Activated CD8-positive, alpha-beta memory T cell treated with anti-CD3 and anti-CD28 coated beads, Interleukin-2, amount 10 ng/mL, durations not matched to agents 7 days and 5 days (primary cell): ENCODE measurements at regions of chr15 and their contacts with region 1.

Region 1: DNA sequence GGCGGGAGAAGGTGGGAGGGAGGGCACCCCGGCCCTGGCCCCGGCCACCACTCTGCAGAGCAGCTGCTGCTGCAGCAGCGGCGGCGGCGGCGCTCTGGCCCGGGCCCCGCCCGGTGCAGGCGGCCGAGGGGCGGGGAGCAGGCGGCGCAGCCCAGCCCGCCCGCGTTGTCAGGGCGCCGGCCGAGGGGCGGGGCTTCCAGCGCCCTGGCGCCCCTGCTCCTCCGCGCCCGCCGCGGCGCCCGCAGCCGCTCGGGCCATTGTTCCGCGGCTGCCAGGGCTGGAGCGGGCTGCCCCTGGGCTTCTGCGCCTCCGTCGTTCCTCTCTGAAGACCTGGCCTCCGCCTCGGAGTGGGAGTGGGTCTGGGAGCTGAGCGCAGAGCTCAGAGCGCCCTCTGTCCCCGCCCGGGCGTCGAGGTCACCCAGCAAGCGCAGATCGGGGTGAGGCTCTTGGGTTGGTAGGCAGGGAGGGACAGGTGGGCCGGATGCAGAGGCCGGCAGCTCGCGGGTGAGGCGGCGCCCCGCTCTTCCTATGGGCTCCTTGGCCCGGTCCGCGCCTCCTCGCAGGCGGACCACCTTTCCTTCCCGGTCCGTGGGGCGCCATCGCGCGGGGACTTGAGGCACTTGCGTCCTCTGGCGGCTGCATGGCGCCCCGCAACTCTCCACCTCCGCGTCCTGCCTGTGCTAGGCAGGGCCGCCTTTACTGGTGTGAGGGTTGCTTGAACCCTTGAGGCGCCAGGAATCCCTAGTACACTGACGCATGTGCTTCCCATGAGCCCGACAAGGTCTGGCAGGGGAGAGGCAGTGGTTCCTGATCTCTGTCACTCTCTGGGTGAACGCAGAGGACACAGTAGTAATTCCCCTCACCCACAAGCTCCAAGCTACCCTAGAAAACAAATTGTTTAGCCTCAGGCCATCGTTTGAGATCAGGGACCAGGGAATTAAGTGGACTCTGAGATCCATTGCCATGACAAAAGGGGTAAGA is at the start of gene LPCAT4:
- DNase-seq: peak; percentile 95
- ATAC-seq: peak; percentile 87
- H3K4me3 Mint-ChIP-seq: peak within 1 kb of the TSS; percentile 96
- H3K27ac Mint-ChIP-seq: peak within 1 kb of the TSS; percentile 97
- H3K4me1 Mint-ChIP-seq: peaks cover 41% of the 10 kb centered on the region
- H3K27me3 Mint-ChIP-seq: no peaks in the 10 kb centered on the region
- total RNA-seq, gene LPCAT4: 126 to 128 TPM

Region 2: DNA sequence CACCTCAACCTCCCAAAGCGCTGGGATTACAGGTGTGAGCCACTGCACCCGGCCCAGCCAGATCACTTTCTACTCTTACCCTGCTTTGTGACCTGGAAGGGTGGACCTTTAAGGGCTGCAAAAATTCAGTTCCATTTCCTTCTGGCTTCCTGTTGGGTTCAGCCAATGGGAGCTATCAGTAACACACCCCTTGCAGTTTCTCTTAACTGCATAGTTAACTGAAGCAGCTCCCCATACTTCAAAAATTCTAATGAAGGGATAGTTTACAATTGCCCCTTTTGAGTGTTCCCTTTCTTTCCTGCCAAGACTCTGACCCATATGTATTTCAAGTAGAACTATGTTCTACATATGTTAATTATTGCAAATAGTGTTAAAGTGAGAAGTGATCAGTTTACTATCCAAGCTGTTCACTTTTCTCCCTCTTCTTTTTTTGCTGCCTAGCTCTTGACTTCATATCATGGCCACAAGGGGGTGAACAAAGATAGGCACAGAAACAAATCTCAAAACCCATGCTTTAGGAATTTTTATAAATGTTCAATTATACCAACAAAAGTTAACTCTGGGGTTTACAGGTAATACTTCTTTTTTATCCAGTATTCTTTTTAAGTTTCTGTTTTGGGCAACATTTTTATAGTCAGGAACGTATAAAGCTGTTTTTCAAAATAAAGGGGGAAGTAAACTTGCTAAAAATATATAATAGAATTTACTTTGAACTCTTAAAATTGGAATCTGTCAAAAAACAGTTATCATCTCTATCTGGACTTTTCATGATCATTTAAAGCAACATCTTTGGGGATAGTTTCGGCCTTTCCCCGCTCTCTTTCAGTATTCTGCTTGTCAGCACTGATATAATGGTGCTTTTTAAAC is 257.4 kb before region 1 on chr15:
- CTCF ChIA-PET with region 1: interaction called, 10 read pairs
- DNase-seq: no peak
- ATAC-seq: peak; percentile 58
- H3K4me3 Mint-ChIP-seq: no peak overlapping the region
- H3K27ac Mint-ChIP-seq: no peak overlapping the region
- H3K4me1 Mint-ChIP-seq: peaks cover 3% of the 10 kb centered on the region
- H3K27me3 Mint-ChIP-seq: peaks cover 3% of the 10 kb centered on the region

Region 3: DNA sequence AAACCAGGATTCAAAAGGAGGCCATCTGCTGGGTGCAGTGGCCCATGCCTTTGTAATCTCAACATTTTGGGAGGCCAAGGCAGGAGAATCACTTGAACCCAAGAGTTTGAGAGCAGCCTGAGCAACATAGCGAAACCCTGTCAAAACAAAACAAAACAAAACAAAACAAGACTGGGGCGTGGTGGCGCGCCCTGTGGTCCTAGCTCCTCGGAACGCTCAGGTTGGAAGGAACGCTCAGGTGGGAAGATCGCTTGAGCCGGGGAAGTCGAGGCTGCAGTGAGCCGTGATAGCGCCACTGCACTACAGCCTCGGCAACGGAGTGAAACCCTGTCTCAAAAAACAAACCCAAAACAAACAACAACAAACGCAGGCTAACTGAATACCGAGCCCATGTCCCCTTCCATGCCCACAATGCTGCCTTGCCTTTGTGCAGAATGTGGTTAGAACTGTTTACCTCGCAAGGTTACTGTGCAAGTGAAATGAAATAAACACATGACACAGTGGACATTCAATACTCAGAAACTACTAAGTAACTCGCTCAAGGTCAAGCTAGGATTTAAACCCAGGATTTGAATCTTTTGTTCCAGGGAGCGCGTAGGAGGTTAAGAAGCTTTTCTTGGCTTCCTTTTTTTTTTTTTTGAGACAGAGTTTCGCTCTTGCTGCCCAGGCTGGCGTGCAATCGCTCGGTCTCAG is 143.3 kb before region 1 on chr15:
- CTCF ChIA-PET with region 1: interaction called, 11 read pairs
- DNase-seq: no peak
- ATAC-seq: peak; percentile 15
- H3K4me3 Mint-ChIP-seq: peak overlapping the region; percentile 97
- H3K27ac Mint-ChIP-seq: peak overlapping the region; percentile 96
- H3K4me1 Mint-ChIP-seq: peaks cover 29% of the 10 kb centered on the region
- H3K27me3 Mint-ChIP-seq: no peaks in the 10 kb centered on the region

Region 4: GRCh38 chr15:34241372-34242330 is 125.7 kb before region 1 on chr15:
- CTCF ChIA-PET with region 1: interaction called, 26 read pairs
- DNase-seq: peak; percentile 56
- ATAC-seq: peak; percentile 77
- H3K4me3 Mint-ChIP-seq: no peak overlapping the region
- H3K27ac Mint-ChIP-seq: peak overlapping the region; percentile 41
- H3K4me1 Mint-ChIP-seq: peaks cover 30% of the 10 kb centered on the region
- H3K27me3 Mint-ChIP-seq: no peaks in the 10 kb centered on the region

Region 5: GRCh38 chr15:34327906-34328305 is 39.5 kb before region 1 on chr15:
- CTCF ChIA-PET with region 1: interaction called, 17 read pairs
- DNase-seq: no peak
- ATAC-seq: no peak
- H3K4me3 Mint-ChIP-seq: peak overlapping the region; percentile 59
- H3K27ac Mint-ChIP-seq: peak overlapping the region; percentile 78
- H3K4me1 Mint-ChIP-seq: peaks cover 64% of the 10 kb centered on the region
- H3K27me3 Mint-ChIP-seq: no peaks in the 10 kb centered on the region

Region 6: DNA sequence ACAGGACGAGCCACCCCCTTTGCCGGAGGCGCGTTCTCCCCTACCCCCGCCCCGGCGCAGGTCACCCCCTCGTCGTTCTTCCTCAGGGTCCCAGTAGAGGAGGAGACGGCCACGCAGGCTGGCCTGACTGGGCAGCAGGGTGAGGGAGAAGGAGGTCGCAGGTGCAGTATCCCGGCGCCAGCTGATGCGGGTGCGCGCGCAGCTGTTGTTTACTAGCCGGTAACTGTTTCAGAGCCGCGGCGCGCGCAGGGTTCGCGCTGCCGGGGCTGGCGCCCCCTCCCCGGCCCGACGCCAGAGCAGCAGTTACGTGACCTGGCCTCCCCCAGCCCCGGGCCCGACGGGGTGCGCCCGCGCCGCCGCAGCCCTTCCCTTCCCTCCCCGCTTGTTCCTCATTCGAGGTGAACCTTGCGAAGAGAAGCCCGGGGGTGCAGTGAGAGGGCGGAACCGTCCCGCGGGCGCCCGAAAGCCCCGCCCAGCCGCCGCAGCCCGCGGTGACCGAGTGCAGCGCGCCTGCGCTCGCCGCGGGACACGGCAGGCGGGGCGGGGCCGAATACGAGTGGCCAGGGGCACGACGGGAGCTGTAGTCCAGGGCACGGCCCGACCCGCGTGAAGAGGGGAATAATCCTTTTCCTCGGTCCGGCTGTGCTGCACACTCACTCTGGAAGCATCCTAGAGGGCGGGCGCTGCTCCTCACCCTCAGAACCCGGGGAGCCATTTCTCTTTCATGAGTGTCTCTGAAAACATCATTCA is 29.7 kb before region 1 on chr15 and contains the start of gene SLC12A6:
- CTCF ChIA-PET with region 1: interaction called, 55 read pairs
- DNase-seq: peak; percentile 93
- ATAC-seq: peak; percentile 84
- H3K4me3 Mint-ChIP-seq: peak within 1 kb of the TSS; percentile 93
- H3K27ac Mint-ChIP-seq: peak within 1 kb of the TSS; percentile 93
- H3K4me1 Mint-ChIP-seq: peaks cover 67% of the 10 kb centered on the region
- H3K27me3 Mint-ChIP-seq: no peaks in the 10 kb centered on the region
- total RNA-seq, gene SLC12A6: 28.2 to 55.2 TPM

Region 7: GRCh38 chr15:34342737-34343575 is 24.4 kb before region 1 on chr15 and contains the starts of genes NOP10 and NUTM1:
- CTCF ChIA-PET with region 1: interaction called, 55 read pairs
- DNase-seq: peak; percentile 96
- ATAC-seq: peak; percentile 85
- H3K4me3 Mint-ChIP-seq: no peak within 1 kb of the TSS
- H3K27ac Mint-ChIP-seq: peak within 1 kb of the TSS; percentile 67
- H3K4me1 Mint-ChIP-seq: peaks cover 29% of the 10 kb centered on the region
- H3K27me3 Mint-ChIP-seq: peaks cover 2% of the 10 kb centered on the region
- total RNA-seq, gene NOP10: 166 to 249 TPM
- total RNA-seq, gene NUTM1: not detected